Mammary epithelial cell (primary cell): ENCODE measurements at regions of chr12 and their contacts with region 1.

Region 1: GRCh38 chr12:54005853-54006686 is 2.7 kb upstream of the HOXC8 start:
- DNase-seq: peak; percentile 59
- H3K4me3 ChIP-seq: no peak overlapping the region
- H3K27ac ChIP-seq: no peak overlapping the region
- H3K4me1 ChIP-seq: peaks cover 10% of the 10 kb centered on the region
- H3K27me3 ChIP-seq: no peaks in the 10 kb centered on the region
- CTCF ChIP-seq: peak; percentile 84 to 86

Region 2: GRCh38 chr12:53978477-53979356 is 27.4 kb before region 1 on chr12:
- CTCF ChIA-PET with region 1: interaction called, 27 read pairs
- dilution Hi-C with region 1: no loop called
- in situ Hi-C with region 1: no loop called
- intact Hi-C with region 1: no loop called
- DNase-seq: no peak
- H3K4me3 ChIP-seq: no peak overlapping the region
- H3K27ac ChIP-seq: no peak overlapping the region
- H3K4me1 ChIP-seq: peaks cover 19% of the 10 kb centered on the region
- H3K27me3 ChIP-seq: peaks cover 2% of the 10 kb centered on the region
- CTCF ChIP-seq: no peak

Region 3: GRCh38 chr12:54032627-54033100 is 26.6 kb after region 1 on chr12 and contains the start of gene HOXC5:
- CTCF ChIA-PET with region 1: interaction called, 4 read pairs
- dilution Hi-C with region 1: no loop called
- in situ Hi-C with region 1: no loop called
- intact Hi-C with region 1: loop called (anchors 1 kb)
- DNase-seq: peak; percentile 53
- H3K4me3 ChIP-seq: peak within 1 kb of the TSS; percentile 47 to 60 (median 54)
- H3K27ac ChIP-seq: peak within 1 kb of the TSS; percentile 33
- H3K4me1 ChIP-seq: peaks cover 30% of the 10 kb centered on the region
- H3K27me3 ChIP-seq: no peaks in the 10 kb centered on the region
- CTCF ChIP-seq: peak; percentile 94 to 95
- total RNA-seq, gene HOXC5: 0.67 to 1.4 TPM

Region 4: GRCh38 chr12:54182086-54182485 is 176.0 kb after region 1 on chr12:
- CTCF ChIA-PET with region 1: interaction called, 16 read pairs
- dilution Hi-C with region 1: no loop called
- in situ Hi-C with region 1: no loop called
- intact Hi-C with region 1: no loop called
- DNase-seq: no peak
- H3K4me3 ChIP-seq: no peak overlapping the region
- H3K27ac ChIP-seq: no peak overlapping the region
- H3K4me1 ChIP-seq: no peaks in the 10 kb centered on the region
- H3K27me3 ChIP-seq: no peaks in the 10 kb centered on the region
- CTCF ChIP-seq: no peak

Region 5: DNA sequence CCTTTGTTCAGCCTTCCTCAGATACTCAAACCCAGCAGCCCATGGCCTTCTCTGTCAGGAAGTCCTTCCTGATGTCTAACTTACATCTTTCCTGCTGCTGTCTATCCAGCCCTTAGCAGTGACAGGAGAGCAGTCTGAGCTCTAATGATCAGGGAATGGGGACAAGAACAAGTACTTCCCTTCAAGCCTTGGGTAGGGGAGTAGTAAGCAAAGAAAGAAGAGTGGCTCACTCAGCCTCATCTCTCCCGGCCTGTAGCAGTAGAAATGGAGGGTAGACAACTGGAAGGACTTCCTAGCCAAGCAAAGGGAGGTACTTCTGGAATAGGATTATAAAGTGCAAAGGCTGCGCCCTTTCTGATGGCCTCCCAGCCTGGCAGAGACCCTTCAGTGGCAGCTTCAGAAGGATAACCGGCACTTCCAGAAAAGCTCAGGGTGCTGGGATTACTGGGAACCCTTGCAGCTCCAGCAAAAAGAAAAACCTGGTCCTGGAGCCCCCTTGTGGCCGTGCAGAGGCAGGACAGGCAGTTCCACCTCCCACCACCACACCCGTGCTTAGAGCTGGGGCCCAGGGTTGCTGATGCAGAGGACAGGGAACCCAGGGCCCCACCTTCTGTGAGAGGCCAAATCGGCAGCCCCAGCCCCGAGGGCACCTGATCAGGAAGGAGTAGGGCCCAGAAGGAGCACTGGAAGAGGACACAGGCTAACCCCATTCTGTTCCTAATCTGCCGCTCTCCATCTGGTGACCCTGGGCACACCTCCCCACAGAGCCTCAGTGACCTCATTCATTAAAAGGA is 195.1 kb after region 1 on chr12:
- CTCF ChIA-PET with region 1: interaction called, 11 read pairs
- dilution Hi-C with region 1: no loop called
- in situ Hi-C with region 1: loop called in 1 of 2 experiments (anchors 5 kb)
- intact Hi-C with region 1: loop called (anchors 1 kb)
- DNase-seq: peak; percentile 43
- H3K4me3 ChIP-seq: no peak overlapping the region
- H3K27ac ChIP-seq: no peak overlapping the region
- H3K4me1 ChIP-seq: peaks cover 4% of the 10 kb centered on the region
- H3K27me3 ChIP-seq: no peaks in the 10 kb centered on the region
- CTCF ChIP-seq: peak; percentile 95 to 99

Region 6: GRCh38 chr12:54359033-54359761 is 353.1 kb after region 1 on chr12:
- CTCF ChIA-PET with region 1: no interaction called
- dilution Hi-C with region 1: loop called (anchors 25 kb)
- in situ Hi-C with region 1: loop called (anchors 25 kb)
- intact Hi-C with region 1: loop called (anchors 10 kb)
- DNase-seq: peak; percentile 98
- H3K4me3 ChIP-seq: peak overlapping the region; percentile 43 to 73 (median 53)
- H3K27ac ChIP-seq: peak overlapping the region; percentile 81
- H3K4me1 ChIP-seq: peaks cover 24% of the 10 kb centered on the region
- H3K27me3 ChIP-seq: no peaks in the 10 kb centered on the region
- CTCF ChIP-seq: no peak